ENCODE measurements at regions of chr11 and their contacts with region 1.

Region 1: GRCh38 chr11:2526808-2527381 is 82.1 kb downstream of the KCNQ1 start:
- DNase-seq: peak; percentile 89
- ATAC-seq: peak; percentile 91
- H3K4me3 ChIP-seq: peak overlapping the region in 4 of 5 experiments; percentile 14 to 57 (median 36)
- H3K4me3 Mint-ChIP-seq: peak overlapping the region; percentile 83
- H3K27ac ChIP-seq: peak overlapping the region; percentile 66 to 72
- H3K27ac Mint-ChIP-seq: peak overlapping the region; percentile 91
- H3K4me1 ChIP-seq: peaks cover 25 to 41% of the 10 kb centered on the region in 2 donors
- H3K4me1 Mint-ChIP-seq: peaks cover 45% of the 10 kb centered on the region
- H3K27me3 ChIP-seq: no peaks in the 10 kb centered on the region
- H3K27me3 Mint-ChIP-seq: no peaks in the 10 kb centered on the region
- CTCF ChIP-seq: peak; percentile 61

Region 2: GRCh38 chr11:2186669-2187279 is 340.1 kb before region 1 on chr11:
- CTCF ChIA-PET with region 1: no interaction called
- POLR2A ChIA-PET with region 1: no interaction called
- intact Hi-C with region 1: loop called (anchors 5 kb)
- DNase-seq: peak; percentile 69
- ATAC-seq: peak; percentile 78
- H3K4me3 ChIP-seq: no peak overlapping the region
- H3K4me3 Mint-ChIP-seq: no peak overlapping the region
- H3K27ac ChIP-seq: no peak overlapping the region
- H3K27ac Mint-ChIP-seq: no peak overlapping the region
- H3K4me1 ChIP-seq: peaks cover 9 to 19% of the 10 kb centered on the region in 2 donors
- H3K4me1 Mint-ChIP-seq: peaks cover 11% of the 10 kb centered on the region
- H3K27me3 ChIP-seq: peaks cover 0 to 5% (median 0%) of the 10 kb centered on the region in 4 experiments
- H3K27me3 Mint-ChIP-seq: peaks cover 13% of the 10 kb centered on the region
- CTCF ChIP-seq: peak; percentile 64

Region 3: DNA sequence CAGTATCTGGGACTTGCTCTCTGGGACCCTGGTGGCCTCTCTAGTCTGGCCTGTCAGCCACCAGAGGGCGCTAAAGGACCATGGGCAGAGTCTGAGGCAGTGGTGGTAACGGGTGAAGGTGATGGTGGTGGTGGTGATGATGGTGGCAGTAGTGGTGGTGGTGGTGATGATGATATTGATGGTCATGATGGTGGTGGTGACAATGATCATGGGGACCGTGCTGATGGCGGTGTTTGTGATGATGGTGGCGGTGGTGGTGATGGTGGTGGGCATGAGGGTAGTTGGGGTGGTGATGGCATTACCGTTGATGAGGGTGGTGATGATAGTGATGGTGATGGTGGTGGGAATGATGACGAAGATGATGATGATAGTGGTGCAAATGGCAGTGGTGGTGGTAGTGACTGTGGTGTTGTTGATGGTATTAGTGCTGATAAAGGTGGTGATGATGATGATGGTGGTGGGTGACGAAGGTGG is 98.5 kb before region 1 on chr11:
- CTCF ChIA-PET with region 1: interaction called, 217 read pairs
- POLR2A ChIA-PET with region 1: interaction called, 4 read pairs
- intact Hi-C with region 1: loop called (anchors 1 kb)
- DNase-seq: peak; percentile 85
- ATAC-seq: peak; percentile 94
- H3K4me3 ChIP-seq: no peak overlapping the region
- H3K4me3 Mint-ChIP-seq: no peak overlapping the region
- H3K27ac ChIP-seq: no peak overlapping the region
- H3K27ac Mint-ChIP-seq: no peak overlapping the region
- H3K4me1 ChIP-seq: no peaks in the 10 kb centered on the region
- H3K4me1 Mint-ChIP-seq: no peaks in the 10 kb centered on the region
- H3K27me3 ChIP-seq: no peaks in the 10 kb centered on the region
- H3K27me3 Mint-ChIP-seq: no peaks in the 10 kb centered on the region
- CTCF ChIP-seq: peak; percentile 82

Region 4: DNA sequence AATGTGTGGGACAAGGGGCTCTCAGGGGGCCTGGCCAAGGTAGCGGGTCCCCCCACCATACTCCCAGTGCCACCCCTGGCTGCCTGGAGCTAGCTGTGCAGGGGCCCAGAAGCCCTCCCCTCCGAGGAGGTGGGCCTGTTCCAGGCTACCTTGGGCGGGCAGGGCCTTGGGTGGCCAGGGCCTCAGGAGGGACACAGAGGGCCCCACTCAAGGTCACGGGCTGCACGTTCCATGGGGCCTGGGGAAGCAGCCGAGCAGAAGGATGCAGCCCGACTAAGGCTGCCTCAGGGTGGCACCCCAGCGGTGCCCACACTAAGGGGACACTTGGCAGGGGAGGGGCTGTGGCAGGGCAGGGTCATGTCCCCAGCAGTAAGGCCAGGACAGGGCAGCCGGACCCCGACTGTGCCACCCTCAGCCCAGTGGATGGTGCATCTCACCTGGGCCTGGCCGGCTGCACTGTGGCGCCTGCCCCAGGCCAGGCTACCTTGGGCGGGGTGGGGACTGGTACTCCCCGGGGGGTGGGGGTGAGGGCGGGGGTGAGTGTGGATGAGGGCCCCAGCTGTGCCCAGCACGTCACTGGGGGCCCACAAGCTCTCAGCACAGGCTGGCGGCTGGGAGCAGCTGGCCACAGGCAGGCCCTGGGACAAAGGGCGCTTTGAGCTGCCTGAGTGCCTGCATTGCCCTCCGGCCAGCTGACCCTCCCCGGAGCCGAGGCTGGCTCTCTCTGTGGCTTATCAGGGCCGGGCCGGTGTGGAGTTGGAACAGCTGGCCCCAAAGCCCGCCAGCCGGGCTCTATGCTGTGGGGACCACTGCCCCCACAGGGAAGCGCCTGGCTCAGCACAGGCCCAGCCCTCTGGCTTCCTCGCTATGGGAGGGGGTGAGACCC is 35.0 kb after region 1 on chr11:
- CTCF ChIA-PET with region 1: no interaction called
- POLR2A ChIA-PET with region 1: no interaction called
- intact Hi-C with region 1: no loop called
- DNase-seq: no peak
- ATAC-seq: no peak
- H3K4me3 ChIP-seq: no peak overlapping the region
- H3K4me3 Mint-ChIP-seq: no peak overlapping the region
- H3K27ac ChIP-seq: no peak overlapping the region
- H3K27ac Mint-ChIP-seq: no peak overlapping the region
- H3K4me1 ChIP-seq: peaks cover 17 to 20% of the 10 kb centered on the region in 2 donors
- H3K4me1 Mint-ChIP-seq: peaks cover 21% of the 10 kb centered on the region
- H3K27me3 ChIP-seq: no peaks in the 10 kb centered on the region
- H3K27me3 Mint-ChIP-seq: no peaks in the 10 kb centered on the region
- CTCF ChIP-seq: no peak

Region 5: DNA sequence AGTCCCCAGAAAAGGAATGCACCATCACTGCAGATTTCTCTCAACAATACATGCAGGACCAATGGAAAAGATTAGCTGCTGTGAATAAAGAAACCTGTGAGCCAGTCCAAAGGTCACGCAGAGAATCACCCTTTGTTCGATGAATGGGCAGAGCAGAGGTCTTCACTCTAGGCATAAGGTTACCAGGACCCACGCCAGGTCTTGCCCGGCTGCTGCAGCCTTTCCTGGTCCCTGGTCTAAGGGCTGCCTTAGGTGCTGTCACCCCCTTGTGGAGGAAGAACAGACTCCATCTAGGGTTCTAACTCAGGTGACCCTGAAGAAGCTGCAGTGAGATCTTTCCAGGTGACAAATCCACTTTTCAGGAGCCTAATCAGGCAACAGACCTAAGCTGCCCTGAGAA is 494.2 kb after region 1 on chr11:
- CTCF ChIA-PET with region 1: no interaction called
- POLR2A ChIA-PET with region 1: no interaction called
- intact Hi-C with region 1: no loop called
- DNase-seq: no peak
- ATAC-seq: no peak
- H3K4me3 ChIP-seq: no peak overlapping the region
- H3K4me3 Mint-ChIP-seq: no peak overlapping the region
- H3K27ac ChIP-seq: no peak overlapping the region
- H3K27ac Mint-ChIP-seq: no peak overlapping the region
- H3K4me1 ChIP-seq: peaks cover 12 to 18% of the 10 kb centered on the region in 2 donors
- H3K4me1 Mint-ChIP-seq: peaks cover 18% of the 10 kb centered on the region
- H3K27me3 ChIP-seq: no peaks in the 10 kb centered on the region
- H3K27me3 Mint-ChIP-seq: no peaks in the 10 kb centered on the region
- CTCF ChIP-seq: peak; percentile 14